ENCODE measurements at regions of chr1 and their contacts with region 1.

Region 1: GRCh38 chr1:67713057-67713846 is 28.3 kb downstream of the GADD45A start:
- DNase-seq: peak; percentile 73

Region 2: GRCh38 chr1:67700692-67701410 is 12.4 kb before region 1 on chr1:
- CTCF ChIA-PET with region 1: interaction called, 4 read pairs
- POLR2A ChIA-PET with region 1: interaction called, 10 read pairs
- DNase-seq: peak; percentile 91

Measured in HEK293T (cell line).